Sigmoid colon (tissue), 7 donors: ENCODE measurements at regions of chr3 and their contacts with region 1.

Region 1: DNA sequence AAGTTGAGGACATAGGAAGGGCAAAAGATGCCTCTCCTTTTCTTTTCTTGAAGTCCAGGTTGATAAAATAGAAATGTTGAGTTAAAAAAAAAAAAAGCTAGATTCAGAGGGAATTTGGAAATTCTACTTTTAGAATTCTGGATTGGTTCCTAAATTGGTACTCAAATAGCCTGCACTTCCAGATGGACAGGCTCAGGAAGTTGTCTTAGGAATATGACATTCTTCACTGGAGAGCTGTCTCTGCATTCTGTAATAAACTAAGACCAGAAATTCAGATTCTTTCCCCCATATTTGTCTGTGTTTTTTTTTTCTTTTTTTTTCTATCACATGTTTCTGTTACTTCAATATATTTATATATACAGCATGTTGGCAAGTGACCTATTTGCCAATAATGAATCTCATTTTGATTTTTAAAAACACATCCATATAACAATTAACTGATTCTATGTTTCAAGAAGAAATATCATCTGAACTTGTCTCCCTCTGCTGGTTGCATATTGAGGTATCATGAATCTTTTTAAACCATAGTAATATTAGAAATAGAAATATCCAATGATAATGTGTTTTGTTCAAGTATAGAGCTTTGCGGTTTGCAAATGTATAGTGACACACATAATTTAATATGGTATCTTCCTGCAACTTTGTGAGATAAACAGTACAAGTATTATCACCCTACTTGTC is 8.5 kb upstream of the LSAMP start:
- DNase-seq: no peak
- H3K4me3 ChIP-seq: no peak overlapping the region
- H3K27ac ChIP-seq: no peak overlapping the region
- H3K4me1 ChIP-seq: peaks cover 0 to 10% (median 4%) of the 10 kb centered on the region in 4 donors
- H3K27me3 ChIP-seq: no peaks in the 10 kb centered on the region
- CTCF ChIP-seq: peak; percentile 13 to 41 (median 31)
- EP300 ChIP-seq: no peak
- POLR2A ChIP-seq: no peak

Region 2: DNA sequence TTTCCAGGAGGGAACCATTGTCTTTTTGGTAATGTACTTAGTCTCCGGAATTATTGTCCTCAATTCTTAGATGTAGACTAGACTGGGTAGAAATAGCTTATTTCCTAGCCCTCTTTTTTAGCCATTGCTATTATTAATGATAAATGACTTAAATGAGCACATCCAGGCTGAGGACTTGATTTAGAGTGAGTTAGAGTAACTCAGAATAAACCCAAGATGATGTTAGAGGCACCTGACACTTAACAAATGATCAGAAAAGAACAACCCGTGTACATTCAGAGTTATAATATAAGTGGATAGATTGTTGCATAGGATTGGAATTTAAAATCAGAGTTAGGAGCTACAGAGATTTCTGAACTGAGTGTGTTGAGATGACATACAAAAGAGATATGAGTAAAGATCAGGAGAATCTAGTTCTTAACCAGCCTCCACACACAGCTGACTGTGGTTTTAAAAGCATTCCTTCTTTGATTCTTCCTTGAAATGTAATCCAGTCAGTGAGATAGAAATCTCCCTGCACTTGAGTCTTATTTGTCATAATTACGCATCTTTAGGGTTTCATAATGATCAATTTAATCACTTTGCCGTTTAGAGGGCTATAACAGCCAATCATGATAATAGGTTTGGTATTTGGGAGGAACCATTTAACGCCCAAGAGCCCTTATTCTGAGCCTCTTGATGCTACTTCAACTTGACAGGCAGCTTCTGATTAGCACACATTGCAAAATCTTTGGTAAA is 464.0 kb before region 1 on chr3:
- intact Hi-C with region 1: no loop called
- DNase-seq: no peak
- H3K4me3 ChIP-seq: no peak overlapping the region
- H3K27ac ChIP-seq: no peak overlapping the region
- H3K4me1 ChIP-seq: no peaks in the 10 kb centered on the region
- H3K27me3 ChIP-seq: no peaks in the 10 kb centered on the region
- CTCF ChIP-seq: no peak
- EP300 ChIP-seq: no peak
- POLR2A ChIP-seq: no peak

Region 3: GRCh38 chr3:116140100-116140689 is 313.6 kb before region 1 on chr3:
- intact Hi-C with region 1: loop called (anchors 2 kb)
- DNase-seq: no peak
- H3K4me3 ChIP-seq: no peak overlapping the region
- H3K27ac ChIP-seq: peak overlapping the region in 2 of 4 donors; percentile 16 to 29
- H3K4me1 ChIP-seq: peaks cover 0 to 37% (median 30%) of the 10 kb centered on the region in 4 donors
- H3K27me3 ChIP-seq: no peaks in the 10 kb centered on the region
- CTCF ChIP-seq: peak; percentile 76 to 93 (median 87)
- EP300 ChIP-seq: no peak
- POLR2A ChIP-seq: no peak

Region 4: GRCh38 chr3:116809208-116809607 is 355.4 kb after region 1 on chr3:
- intact Hi-C with region 1: no loop called
- DNase-seq: no peak
- H3K4me3 ChIP-seq: no peak overlapping the region
- H3K27ac ChIP-seq: no peak overlapping the region
- H3K4me1 ChIP-seq: peaks cover 0 to 11% (median 6%) of the 10 kb centered on the region in 4 donors
- H3K27me3 ChIP-seq: no peaks in the 10 kb centered on the region
- CTCF ChIP-seq: no peak
- EP300 ChIP-seq: no peak
- POLR2A ChIP-seq: no peak

Region 5: DNA sequence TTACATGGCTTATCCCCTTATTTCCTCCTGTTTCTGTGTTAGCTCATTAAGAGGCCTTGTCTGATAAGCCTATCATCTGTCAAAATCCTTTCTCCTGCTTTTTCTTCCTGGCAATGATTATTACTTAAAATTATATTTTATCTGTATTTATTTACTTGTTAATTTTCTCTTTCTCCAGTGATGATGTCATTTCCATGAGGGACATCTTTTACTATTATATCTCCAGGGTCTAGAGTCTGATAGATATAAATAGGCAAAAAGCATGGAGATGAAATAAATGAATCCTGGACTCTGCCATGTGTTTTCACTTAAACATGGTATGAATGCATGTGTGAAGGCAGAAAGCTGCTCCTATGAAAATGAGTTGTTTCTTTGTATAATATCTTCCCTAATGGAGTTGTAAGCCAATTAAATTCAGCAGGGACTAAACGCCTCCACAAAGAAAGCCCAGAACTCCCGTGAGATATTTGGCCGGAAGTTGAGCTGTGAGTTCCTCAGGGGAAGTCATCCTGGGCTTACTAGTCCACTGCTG is 631.0 kb after region 1 on chr3:
- intact Hi-C with region 1: no loop called
- DNase-seq: no peak
- H3K4me3 ChIP-seq: no peak overlapping the region
- H3K27ac ChIP-seq: no peak overlapping the region
- H3K4me1 ChIP-seq: no peaks in the 10 kb centered on the region
- H3K27me3 ChIP-seq: no peaks in the 10 kb centered on the region
- CTCF ChIP-seq: no peak
- EP300 ChIP-seq: no peak
- POLR2A ChIP-seq: no peak